Activated naive CD4-positive, alpha-beta T cell treated with anti-CD3 and anti-CD28 coated beads, Interleukin-2, amount 10 ng/mL, durations not matched to agents 7 days and 5 days (primary cell): ENCODE measurements at regions of chr10 and their contacts with region 1.

Region 1: GRCh38 chr10:80205478-80206276 is at the start of gene ANXA11:
- DNase-seq: peak; percentile 90
- H3K4me3 Mint-ChIP-seq: peak within 1 kb of the TSS; percentile 98
- H3K27ac Mint-ChIP-seq: peak within 1 kb of the TSS; percentile 91
- H3K4me1 Mint-ChIP-seq: peaks cover 44% of the 10 kb centered on the region
- H3K27me3 Mint-ChIP-seq: no peaks in the 10 kb centered on the region

Region 2: GRCh38 chr10:80144067-80144695 is 61.5 kb before region 1 on chr10:
- CTCF ChIA-PET with region 1: interaction called, 26 read pairs
- DNase-seq: peak; percentile 48
- H3K4me3 Mint-ChIP-seq: peak overlapping the region; percentile 68
- H3K27ac Mint-ChIP-seq: peak overlapping the region; percentile 66
- H3K4me1 Mint-ChIP-seq: peaks cover 21% of the 10 kb centered on the region
- H3K27me3 Mint-ChIP-seq: peaks cover 31% of the 10 kb centered on the region

Region 3: DNA sequence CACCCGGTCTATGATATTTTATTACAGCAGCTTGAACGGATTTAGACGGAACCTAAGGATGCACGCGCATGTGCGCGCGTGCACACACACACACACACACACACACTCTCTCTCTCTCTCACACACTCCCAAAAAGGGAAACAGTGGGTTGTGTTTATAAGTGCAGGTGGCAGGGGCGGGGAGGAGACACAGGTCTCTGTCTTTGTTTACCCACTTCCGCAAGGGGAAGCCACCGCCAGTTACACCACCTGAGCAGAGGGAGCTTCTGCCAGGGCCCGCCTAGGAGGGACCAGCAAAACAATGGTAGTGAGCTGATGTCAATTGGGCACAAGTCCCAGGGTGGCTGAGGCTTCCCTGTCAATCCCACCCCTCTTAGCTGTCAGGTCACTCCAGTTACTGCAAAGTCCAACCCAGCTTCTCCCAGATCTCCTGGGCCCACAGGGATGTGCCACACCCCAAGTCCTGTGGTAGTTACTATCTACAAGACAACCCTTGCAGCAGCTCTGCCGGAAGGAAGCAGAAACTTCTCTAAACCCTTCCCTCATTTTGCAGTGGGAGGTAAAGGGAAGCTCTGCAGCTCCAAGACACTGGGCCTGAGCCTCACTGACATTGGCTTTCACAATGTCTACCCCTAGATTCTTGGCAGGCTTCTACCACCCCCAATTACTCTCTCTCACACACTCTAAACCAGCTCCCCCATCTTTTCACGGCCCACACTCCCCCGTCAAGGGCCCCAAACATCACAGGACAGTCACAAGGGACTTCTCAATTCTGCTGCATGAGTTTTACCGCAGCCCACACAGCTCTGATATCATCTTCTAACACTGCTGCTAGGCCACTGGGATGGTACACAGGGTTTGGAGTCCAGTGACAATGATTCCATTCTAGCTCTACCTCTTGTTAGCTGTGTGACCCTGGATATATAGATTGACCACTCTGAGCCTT is 17.9 kb before region 1 on chr10:
- CTCF ChIA-PET with region 1: interaction called, 58 read pairs
- DNase-seq: peak; percentile 91
- H3K4me3 Mint-ChIP-seq: peak overlapping the region; percentile 61
- H3K27ac Mint-ChIP-seq: peak overlapping the region; percentile 92
- H3K4me1 Mint-ChIP-seq: peaks cover 77% of the 10 kb centered on the region
- H3K27me3 Mint-ChIP-seq: no peaks in the 10 kb centered on the region

Region 4: GRCh38 chr10:80194406-80195260 is 11.0 kb before region 1 on chr10:
- CTCF ChIA-PET with region 1: interaction called, 14 read pairs
- DNase-seq: no peak
- H3K4me3 Mint-ChIP-seq: no peak overlapping the region
- H3K27ac Mint-ChIP-seq: no peak overlapping the region
- H3K4me1 Mint-ChIP-seq: peaks cover 65% of the 10 kb centered on the region
- H3K27me3 Mint-ChIP-seq: no peaks in the 10 kb centered on the region